Dorsolateral prefrontal cortex (tissue), 120 donors: ENCODE measurements at regions of chr3 and their contacts with region 1.

Region 1: GRCh38 chr3:52845691-52846431 is 11.0 kb upstream of the MUSTN1 start:
- DNase-seq: no peak
- H3K4me3 ChIP-seq: peak overlapping the region in 12 of 59 donors; percentile 3 to 47 (median 16)
- H3K27ac ChIP-seq: peak overlapping the region; percentile 25 to 93 (median 84)
- H3K27me3 ChIP-seq: no peaks in the 10 kb centered on the region
- CTCF ChIP-seq: peak in 53 of 56 donors; percentile 22 to 71 (median 55)

Region 2: DNA sequence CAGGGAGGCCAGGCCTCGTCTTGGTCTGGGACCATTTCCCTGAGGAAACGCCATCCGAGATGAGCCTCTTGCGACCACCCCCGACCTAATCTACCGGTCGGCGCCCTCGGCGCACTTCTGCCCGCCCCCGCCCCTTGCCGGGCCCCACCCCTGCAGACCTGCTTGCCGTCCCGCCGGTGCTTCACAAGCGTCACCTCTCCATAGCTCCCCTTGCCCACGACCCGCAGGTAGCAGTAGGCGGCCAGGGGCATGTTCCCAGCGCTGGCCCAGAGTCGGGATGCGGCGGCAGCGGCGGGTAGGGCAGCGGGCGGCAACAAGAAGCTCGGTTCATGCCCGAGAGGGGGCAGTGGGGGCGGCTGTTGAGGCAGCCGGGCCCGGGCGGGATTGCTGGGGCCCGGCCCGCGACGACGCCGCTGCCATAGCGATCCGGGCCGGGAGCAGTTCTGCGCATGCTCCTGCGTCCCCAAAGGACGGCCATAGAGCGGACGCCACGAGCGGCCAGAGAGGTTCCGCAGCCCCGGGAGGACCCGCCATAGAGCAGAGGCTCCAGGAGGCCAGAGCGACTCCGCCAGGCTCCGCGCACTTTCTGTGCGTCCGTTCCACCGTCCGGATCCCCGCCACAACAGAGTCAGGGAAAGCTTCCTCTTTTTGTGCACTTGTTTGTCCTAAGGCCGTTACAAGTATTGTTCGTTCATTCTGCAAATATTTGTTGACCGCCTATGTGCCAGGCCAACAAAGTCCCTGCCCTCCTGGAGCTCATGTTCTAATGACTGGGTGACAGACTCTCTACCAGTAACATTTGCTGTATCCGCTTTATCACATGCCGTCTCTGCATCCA is 75.1 kb before region 1 on chr3 and contains the start of gene NEK4:
- intact Hi-C with region 1: loop called in 1 of 2 experiments (anchors 2 kb)
- DNase-seq: peak; percentile 86 to 96 (median 92)
- H3K4me3 ChIP-seq: peak within 1 kb of the TSS; percentile 63 to 98 (median 89)
- H3K27ac ChIP-seq: peak within 1 kb of the TSS; percentile 20 to 93 (median 80)
- H3K27me3 ChIP-seq: no peaks in the 10 kb centered on the region
- CTCF ChIP-seq: peak in 44 of 56 donors; percentile 8 to 68 (median 39)
- total RNA-seq, gene NEK4: 34.0 to 82.9 (median 51.4) TPM

Region 3: GRCh38 chr3:52897130-52898122 is 51.6 kb after region 1 on chr3 and contains the start of gene STIMATE:
- intact Hi-C with region 1: loop called in 1 of 2 experiments (anchors 2 kb)
- DNase-seq: peak; percentile 80 to 95 (median 90)
- H3K4me3 ChIP-seq: peak within 1 kb of the TSS; percentile 65 to 99 (median 89)
- H3K27ac ChIP-seq: peak within 1 kb of the TSS in 50 of 59 donors; percentile 5 to 87 (median 68)
- H3K27me3 ChIP-seq: no peaks in the 10 kb centered on the region
- CTCF ChIP-seq: peak in 20 of 56 donors; percentile 6 to 54 (median 26)
- total RNA-seq, gene STIMATE: 9.2 to 40.0 (median 20.3) TPM

Region 4: DNA sequence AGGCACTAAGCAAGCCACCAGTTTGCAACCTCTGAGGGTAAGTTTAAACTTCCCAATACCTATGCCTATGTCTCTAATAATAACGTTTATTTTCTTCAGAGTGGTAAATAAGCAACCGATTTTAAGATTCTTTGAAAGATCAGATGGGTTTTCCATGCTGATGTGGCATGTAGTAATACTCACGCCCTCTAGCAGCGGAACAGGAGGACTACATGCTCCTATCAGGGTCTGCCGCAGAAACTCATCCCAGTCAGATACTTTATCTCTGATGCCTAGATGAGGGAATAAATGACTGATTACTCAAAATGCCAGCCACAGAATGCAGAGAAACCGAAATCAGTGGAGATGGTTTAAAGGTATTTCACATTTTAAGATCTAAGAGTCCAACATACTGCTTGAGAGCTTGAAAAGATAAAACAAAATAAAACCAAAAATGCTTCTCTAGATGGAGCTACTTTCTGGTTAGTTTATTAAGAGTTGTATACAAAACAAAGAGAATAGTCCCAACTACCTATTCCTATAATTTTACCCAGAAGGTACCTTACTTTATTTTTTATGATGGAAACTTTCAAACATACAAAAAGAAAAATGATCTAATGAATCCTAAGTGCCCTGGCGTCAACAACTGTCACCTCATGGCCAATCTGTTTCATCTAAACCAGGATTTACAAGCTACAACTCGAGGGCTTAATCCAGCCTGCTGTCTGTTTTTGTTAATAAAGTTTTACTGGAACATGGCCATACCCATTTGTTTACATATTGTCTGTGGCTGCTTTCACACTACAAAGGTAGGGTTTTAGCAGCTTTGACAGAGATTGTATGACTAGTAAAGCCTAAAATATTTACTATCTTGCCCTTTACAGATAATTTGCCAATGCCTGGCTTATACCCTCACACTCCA is 89.0 kb after region 1 on chr3:
- intact Hi-C with region 1: loop called (anchors 5 to 10 kb)
- DNase-seq: peak in 8 of 10 donors; percentile 41 to 68 (median 54)
- H3K4me3 ChIP-seq: no peak overlapping the region
- H3K27ac ChIP-seq: no peak overlapping the region
- H3K27me3 ChIP-seq: no peaks in the 10 kb centered on the region
- CTCF ChIP-seq: peak; percentile 40 to 82 (median 71)